AG04450 (cell line): ENCODE measurements at regions of chr11 and their contacts with region 1.

Region 1: GRCh38 chr11:75582895-75583717 is 21.1 kb downstream of the SERPINH1 start:
- DNase-seq: no peak
- H3K4me3 ChIP-seq: peak overlapping the region; percentile 56
- H3K27ac ChIP-seq: peak overlapping the region; percentile 61
- H3K27me3 ChIP-seq: no peaks in the 10 kb centered on the region
- CTCF ChIP-seq: peak; percentile 34

Region 2: DNA sequence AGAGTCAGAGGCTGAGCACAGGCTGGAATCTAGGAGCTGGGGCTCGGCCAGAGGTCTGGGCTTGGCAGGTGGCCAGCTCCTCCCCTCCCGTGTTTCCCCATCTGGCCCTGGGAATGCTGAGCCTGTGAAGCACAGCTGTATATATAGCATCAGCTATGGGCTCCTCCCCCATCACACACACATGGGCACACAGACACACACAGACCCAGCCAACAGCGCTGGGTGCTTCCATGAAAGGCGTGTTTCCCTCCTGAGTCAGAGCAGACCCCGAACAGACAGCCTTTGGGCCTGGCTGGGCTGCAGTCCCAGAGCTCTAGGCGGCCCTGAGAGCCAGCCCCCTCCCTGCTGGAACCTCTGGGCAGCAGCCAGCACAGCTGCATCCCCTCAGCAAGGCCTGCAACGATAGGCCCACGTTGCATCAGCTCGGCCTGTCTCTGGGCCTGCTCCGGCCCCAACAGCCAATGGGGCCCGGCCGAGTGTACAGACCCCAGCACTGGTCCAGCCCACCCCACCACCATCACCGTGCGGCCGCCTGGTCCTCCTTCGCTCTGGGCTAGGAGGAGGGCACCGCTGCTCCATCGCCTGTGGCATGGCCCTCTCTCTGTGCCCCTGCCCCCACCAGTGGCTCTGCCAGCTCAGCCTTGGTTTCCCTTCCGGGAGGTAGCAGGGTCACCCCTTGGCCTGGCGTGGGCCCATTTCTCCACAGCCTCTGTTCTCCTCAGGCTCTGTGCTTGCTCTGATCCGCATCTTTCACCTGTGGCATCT is 28.7 kb before region 1 on chr11:
- CTCF ChIA-PET with region 1: no interaction called
- POLR2A ChIA-PET with region 1: interaction called, 85 read pairs
- DNase-seq: peak; percentile 100
- H3K4me3 ChIP-seq: peak overlapping the region; percentile 52
- H3K27ac ChIP-seq: peak overlapping the region; percentile 97
- H3K27me3 ChIP-seq: no peaks in the 10 kb centered on the region
- CTCF ChIP-seq: no peak

Region 3: DNA sequence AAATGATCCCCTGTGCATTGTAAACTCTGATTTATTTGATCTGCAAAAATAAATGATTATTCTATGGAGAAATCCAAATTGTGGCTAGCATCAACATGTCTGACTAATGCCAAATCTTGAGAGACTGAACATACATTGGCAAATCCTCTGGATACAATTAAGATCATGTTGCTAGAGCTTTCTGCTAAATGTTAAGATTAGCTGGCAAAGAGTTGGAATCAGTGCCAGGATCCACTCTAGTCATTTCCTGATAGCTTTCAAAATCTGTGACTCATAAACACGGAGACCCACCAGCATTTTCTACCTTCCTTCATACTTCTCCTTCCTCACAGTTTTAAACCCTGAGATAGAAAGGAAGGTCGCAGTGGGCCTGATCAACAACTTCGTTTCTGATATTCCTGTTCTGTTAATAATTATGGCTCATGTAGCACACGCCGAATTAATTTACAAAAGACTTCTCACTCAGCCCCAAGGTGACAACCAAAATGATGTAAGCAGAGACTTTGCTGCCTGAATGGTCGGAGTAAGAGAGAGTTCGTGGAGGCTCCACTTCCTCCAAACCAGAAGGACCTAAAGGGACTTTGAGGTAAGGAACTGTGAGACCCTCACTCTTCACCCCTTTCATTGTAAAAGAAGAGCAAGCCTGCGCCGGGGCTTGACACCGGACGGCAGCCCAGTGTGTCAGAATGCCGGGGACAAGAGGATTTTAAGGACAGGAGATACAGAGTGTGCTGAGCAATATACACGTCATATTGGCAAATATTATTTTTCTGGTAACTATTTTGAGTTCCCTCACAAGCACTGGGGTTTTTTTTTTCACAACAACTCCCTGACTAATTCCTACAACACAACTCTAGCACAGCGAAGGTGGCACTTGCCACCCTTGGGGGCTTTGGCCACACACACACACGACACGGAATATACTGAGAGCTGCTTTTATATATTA is 21.0 kb after region 1 on chr11:
- CTCF ChIA-PET with region 1: no interaction called
- POLR2A ChIA-PET with region 1: interaction called, 11 read pairs
- DNase-seq: peak; percentile 74
- H3K4me3 ChIP-seq: no peak overlapping the region
- H3K27ac ChIP-seq: peak overlapping the region; percentile 62
- H3K27me3 ChIP-seq: no peaks in the 10 kb centered on the region
- CTCF ChIP-seq: no peak

Region 4: GRCh38 chr11:75635066-75635862 is 52.2 kb after region 1 on chr11:
- CTCF ChIA-PET with region 1: no interaction called
- POLR2A ChIA-PET with region 1: no interaction called
- DNase-seq: no peak
- H3K4me3 ChIP-seq: no peak overlapping the region
- H3K27ac ChIP-seq: peak overlapping the region; percentile 13
- H3K27me3 ChIP-seq: peaks cover 4% of the 10 kb centered on the region
- CTCF ChIP-seq: no peak